Mammary epithelial cell (primary cell): ENCODE measurements at regions of chr19 and their contacts with region 1.

Region 1: GRCh38 chr19:13952154-13953035 is at the start of gene DCAF15:
- DNase-seq: peak; percentile 99
- H3K4me3 ChIP-seq: peak within 1 kb of the TSS; percentile 83 to 86 (median 84)
- H3K27ac ChIP-seq: peak within 1 kb of the TSS; percentile 30
- H3K4me1 ChIP-seq: peaks cover 11% of the 10 kb centered on the region
- H3K27me3 ChIP-seq: no peaks in the 10 kb centered on the region
- CTCF ChIP-seq: no peak
- total RNA-seq, gene DCAF15: 15.2 to 31.3 TPM

Region 2: DNA sequence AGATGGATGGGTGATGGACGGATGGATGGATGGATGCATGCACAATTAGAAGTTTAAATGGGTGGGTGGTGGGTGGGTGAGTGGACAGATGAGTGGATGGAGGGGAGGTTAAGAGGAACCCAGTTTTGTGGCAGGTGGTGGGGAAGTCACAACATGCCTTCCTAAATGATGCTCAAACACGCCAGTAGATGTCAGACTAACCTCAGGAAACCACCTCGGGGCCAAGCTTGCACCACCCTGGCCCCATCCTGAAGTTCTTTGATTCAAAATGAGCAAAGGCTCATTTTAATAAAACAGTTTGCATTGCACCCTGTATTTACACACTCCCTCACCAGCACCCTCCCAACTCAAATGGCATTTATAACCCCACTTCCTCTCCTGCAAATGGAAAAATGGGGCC is 354.8 kb before region 1 on chr19:
- CTCF ChIA-PET with region 1: interaction called, 10 read pairs
- dilution Hi-C with region 1: no loop called
- in situ Hi-C with region 1: no loop called
- intact Hi-C with region 1: no loop called
- DNase-seq: peak; percentile 50
- H3K4me3 ChIP-seq: no peak overlapping the region
- H3K27ac ChIP-seq: no peak overlapping the region
- H3K4me1 ChIP-seq: no peaks in the 10 kb centered on the region
- H3K27me3 ChIP-seq: no peaks in the 10 kb centered on the region
- CTCF ChIP-seq: peak; percentile 44 to 69

Region 3: DNA sequence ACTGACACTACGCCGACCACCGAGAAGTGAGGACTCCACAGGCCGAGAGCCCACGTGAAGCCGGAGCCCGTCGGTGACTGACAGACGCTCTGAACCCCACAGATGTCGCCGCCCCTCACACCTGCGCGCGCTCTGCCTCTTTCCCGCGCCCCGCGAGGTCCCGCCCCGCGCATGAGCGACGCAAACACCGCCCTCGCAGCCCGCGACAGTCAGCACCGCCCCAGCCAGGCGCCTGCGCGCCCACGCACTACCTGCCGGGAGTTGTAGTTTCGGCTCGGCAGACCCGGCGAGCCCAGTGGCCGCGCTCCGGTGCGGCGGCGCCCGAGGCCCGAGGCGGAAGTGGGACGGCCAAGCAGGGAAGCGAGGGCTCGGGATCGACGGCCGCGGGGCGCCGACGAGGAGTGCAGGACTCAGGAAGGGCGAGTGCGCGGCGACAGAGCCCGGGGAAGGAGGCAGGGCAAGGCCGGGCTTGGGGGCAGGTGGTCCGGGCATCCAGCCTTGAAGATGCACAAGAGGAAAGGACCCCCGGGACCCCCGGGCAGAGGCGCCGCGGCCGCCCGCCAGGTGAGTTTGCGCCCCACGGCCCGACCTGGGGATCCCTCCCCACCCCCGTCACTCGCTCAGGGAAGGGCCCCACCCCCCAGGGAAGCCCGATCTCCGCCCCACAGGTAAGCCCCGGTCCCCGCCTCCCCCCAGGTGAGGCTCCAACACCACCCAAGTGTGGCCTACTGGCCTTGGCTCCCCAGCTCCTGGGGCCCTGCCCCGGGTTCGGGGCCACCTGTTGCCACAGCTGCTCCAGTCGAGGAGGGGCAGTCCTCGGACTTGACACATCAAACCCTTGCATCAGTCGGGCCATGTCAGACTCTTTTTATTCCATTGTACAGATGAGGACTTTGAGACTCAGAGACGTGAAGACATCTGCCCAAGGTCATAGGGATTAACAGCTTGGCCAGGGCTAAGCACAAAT is 46.2 kb before region 1 on chr19 and contains the starts of genes BRME1 and CC2D1A:
- CTCF ChIA-PET with region 1: no interaction called
- dilution Hi-C with region 1: no loop called
- in situ Hi-C with region 1: no loop called
- intact Hi-C with region 1: loop called (anchors 2 kb)
- DNase-seq: peak; percentile 86
- H3K4me3 ChIP-seq: peak within 1 kb of the TSS; percentile 82 to 99 (median 91)
- H3K27ac ChIP-seq: no peak within 1 kb of the TSS
- H3K4me1 ChIP-seq: peaks cover 9% of the 10 kb centered on the region
- H3K27me3 ChIP-seq: no peaks in the 10 kb centered on the region
- CTCF ChIP-seq: no peak
- total RNA-seq, gene BRME1: 1.0 to 3.8 TPM
- total RNA-seq, gene CC2D1A: 31.7 to 58.8 TPM

Region 4: DNA sequence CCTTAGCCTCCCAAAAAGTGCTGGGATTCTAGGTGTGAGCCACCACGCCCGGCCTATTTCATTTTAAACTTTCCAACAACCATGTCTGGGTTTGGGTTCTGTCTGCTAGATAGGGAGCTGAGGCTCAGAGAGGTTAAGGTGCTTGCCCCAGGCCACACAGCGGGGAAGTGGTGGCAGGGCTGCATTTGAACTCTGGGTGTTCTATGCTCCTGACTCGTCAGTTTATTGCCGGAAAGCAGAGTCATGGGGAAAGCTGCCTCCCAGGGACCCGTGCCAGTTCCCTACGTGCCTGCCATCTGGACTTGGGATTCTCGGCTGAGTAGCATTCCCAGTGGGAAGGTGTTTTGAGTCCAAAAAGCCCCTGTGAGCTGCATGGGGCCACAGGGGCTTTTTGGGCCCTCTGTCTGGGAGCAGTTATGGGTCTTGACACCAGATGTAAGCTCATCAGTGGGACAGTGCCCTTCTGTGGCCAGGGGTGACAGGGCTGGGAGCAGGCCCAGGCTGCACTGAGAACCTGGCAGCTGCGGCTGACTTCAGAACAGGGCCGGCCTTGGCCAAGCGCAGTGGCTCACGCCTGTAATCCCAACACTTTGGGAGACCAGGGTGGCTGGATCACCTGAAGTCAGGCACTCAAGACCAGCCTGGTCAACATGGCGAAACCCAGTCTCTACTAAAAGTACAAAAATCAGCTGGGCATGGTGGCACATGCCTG is 42.8 kb after region 1 on chr19:
- CTCF ChIA-PET with region 1: no interaction called
- dilution Hi-C with region 1: loop called (anchors 5 kb)
- in situ Hi-C with region 1: no loop called
- intact Hi-C with region 1: no loop called
- DNase-seq: no peak
- H3K4me3 ChIP-seq: no peak overlapping the region
- H3K27ac ChIP-seq: no peak overlapping the region
- H3K4me1 ChIP-seq: no peaks in the 10 kb centered on the region
- H3K27me3 ChIP-seq: no peaks in the 10 kb centered on the region
- CTCF ChIP-seq: no peak

Region 5: DNA sequence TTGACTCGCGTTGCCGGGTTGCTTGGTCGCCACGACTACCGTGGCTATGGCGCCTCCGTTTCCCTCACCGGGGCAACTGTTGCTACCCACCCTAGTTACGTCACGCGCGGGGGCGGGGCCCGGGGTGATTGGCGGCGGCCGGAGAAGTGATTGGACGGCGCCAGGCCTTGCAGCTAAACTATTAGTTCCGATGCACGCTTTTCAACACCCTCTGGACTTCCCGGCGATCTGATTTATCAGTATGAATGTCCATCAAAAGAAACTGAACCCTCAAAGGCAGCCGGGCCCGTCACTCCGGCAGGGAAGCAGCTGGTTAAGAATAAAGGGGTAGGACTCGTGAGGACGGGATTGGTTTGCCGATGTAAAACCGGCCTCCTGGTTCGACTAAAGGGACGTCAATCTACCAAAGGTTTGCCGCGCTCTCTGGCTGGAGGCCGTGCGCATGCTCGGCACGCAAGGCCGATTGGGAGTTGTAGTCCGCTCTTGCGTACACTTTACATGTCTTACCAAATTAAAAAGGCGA is 53.9 kb after region 1 on chr19 and contains the start of gene RFX1:
- CTCF ChIA-PET with region 1: no interaction called
- dilution Hi-C with region 1: no loop called
- in situ Hi-C with region 1: no loop called
- intact Hi-C with region 1: no loop called
- DNase-seq: peak; percentile 100
- H3K4me3 ChIP-seq: peak within 1 kb of the TSS; percentile 72 to 96 (median 73)
- H3K27ac ChIP-seq: peak within 1 kb of the TSS; percentile 99
- H3K4me1 ChIP-seq: peaks cover 16% of the 10 kb centered on the region
- H3K27me3 ChIP-seq: no peaks in the 10 kb centered on the region
- CTCF ChIP-seq: no peak
- total RNA-seq, gene RFX1: 2.7 to 12.0 TPM

Region 6: DNA sequence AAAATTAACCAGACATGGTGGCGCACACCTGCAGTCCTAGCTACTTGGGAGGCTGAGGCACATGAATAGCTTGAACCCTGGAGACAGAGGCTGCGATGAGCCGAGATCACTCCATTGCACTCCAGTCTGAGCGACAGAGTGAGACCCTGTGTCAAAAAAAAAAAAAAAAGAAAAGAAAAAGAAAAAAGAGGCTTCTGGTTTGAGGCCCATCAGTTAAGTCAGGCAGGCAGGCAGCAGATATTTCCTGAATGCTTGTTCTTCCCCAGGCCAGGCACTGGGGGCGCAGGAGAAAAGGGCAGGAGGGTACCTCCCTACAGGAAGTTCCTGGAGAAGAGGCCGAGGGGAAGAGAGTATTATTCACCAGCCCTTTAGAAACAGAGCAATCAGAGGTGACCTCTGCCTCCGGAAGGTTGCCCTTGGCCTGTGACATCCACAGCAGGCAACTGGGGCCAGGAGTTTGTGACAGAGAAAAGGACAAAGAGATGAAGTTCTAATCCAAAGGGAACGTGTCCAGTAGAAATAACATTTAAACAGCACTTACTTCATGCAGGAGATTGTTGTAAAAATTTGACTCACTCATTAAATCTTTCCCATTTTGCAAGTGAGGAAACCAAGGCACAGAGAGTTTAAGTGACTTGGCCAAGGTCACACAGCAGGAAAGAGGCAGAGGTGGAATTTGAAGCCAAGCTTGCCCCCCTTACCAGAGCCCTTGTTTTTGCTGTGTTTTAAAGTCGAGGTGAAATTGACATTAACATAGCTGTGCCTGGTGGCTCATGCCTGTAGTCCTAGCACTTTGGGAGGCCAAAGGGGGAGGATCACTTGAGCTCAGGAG is 71.2 kb after region 1 on chr19:
- CTCF ChIA-PET with region 1: no interaction called
- dilution Hi-C with region 1: loop called (anchors 5 kb)
- in situ Hi-C with region 1: no loop called
- intact Hi-C with region 1: no loop called
- DNase-seq: peak; percentile 34
- H3K4me3 ChIP-seq: no peak overlapping the region
- H3K27ac ChIP-seq: no peak overlapping the region
- H3K4me1 ChIP-seq: no peaks in the 10 kb centered on the region
- H3K27me3 ChIP-seq: no peaks in the 10 kb centered on the region
- CTCF ChIP-seq: peak; percentile 50 to 51

Region 7: GRCh38 chr19:14073261-14073924 is 121.0 kb after region 1 on chr19:
- CTCF ChIA-PET with region 1: no interaction called
- dilution Hi-C with region 1: no loop called
- in situ Hi-C with region 1: no loop called
- intact Hi-C with region 1: loop called (anchors 5 kb)
- DNase-seq: peak; percentile 74
- H3K4me3 ChIP-seq: peak overlapping the region; percentile 48 to 84 (median 49)
- H3K27ac ChIP-seq: peak overlapping the region; percentile 29
- H3K4me1 ChIP-seq: peaks cover 26% of the 10 kb centered on the region
- H3K27me3 ChIP-seq: no peaks in the 10 kb centered on the region
- CTCF ChIP-seq: peak in 1 of 2 donors; percentile 38

Region 8: DNA sequence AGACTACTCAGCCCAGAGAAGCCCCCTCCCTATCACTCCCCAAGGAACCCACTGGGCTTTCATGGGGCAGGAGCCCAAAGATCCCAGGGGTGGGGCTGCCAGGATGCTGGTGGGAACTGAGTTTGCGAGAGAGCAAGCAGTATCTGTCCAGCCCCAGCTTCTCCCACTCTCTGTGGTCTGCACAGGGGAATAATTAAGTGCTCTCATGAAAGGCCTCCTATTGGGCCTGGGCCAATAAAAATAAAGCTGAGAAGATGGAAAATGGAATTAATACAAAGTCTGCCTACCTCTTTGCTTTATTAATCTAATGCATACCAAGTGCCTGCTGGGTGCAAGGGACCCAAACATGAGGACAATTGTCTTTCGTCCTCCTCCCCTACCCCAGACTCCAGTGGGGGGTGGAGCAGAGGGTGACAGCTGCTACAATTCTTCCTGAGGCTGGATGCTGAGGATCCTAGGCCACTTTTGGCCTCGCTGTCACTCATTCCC is 461.3 kb after region 1 on chr19:
- CTCF ChIA-PET with region 1: no interaction called
- dilution Hi-C with region 1: loop called (anchors 5 kb)
- in situ Hi-C with region 1: no loop called
- intact Hi-C with region 1: no loop called
- DNase-seq: no peak
- H3K4me3 ChIP-seq: no peak overlapping the region
- H3K27ac ChIP-seq: no peak overlapping the region
- H3K4me1 ChIP-seq: peaks cover 16% of the 10 kb centered on the region
- H3K27me3 ChIP-seq: no peaks in the 10 kb centered on the region
- CTCF ChIP-seq: no peak